ENCODE measurements at regions of chr18 and their contacts with region 1.

Region 1: DNA sequence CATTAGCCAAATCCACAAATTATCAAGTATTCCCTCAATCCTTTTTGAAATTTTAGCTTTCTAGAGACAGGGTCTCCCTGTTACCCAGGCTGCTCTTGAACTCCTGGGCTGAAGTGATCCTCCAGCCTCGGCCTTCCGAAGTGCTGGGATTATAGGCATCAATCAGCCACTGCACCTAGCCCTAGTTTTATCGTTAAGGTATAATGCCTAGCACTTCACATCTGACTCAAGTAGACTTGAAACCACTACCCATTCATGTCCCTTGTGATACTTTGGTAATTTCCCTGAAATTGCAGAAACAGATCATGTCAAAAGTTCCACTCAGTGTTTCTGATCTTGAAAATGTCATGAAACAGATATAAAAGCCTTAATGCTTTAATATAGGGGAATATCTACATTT is 26.3 kb downstream of the MEX3C start:
- DNase-seq: no peak
- H3K4me3 ChIP-seq: no peak overlapping the region
- H3K27ac ChIP-seq: no peak overlapping the region
- H3K4me1 ChIP-seq: peaks cover 5% of the 10 kb centered on the region
- H3K27me3 ChIP-seq: no peaks in the 10 kb centered on the region
- CTCF ChIP-seq: no peak

Region 2: GRCh38 chr18:51039138-51040112 is 131.8 kb before region 1 on chr18:
- intact Hi-C with region 1: no loop called
- DNase-seq: no peak
- H3K4me3 ChIP-seq: no peak overlapping the region
- H3K27ac ChIP-seq: no peak overlapping the region
- H3K4me1 ChIP-seq: peaks cover 100% of the 10 kb centered on the region
- H3K27me3 ChIP-seq: no peaks in the 10 kb centered on the region
- CTCF ChIP-seq: no peak

Region 3: DNA sequence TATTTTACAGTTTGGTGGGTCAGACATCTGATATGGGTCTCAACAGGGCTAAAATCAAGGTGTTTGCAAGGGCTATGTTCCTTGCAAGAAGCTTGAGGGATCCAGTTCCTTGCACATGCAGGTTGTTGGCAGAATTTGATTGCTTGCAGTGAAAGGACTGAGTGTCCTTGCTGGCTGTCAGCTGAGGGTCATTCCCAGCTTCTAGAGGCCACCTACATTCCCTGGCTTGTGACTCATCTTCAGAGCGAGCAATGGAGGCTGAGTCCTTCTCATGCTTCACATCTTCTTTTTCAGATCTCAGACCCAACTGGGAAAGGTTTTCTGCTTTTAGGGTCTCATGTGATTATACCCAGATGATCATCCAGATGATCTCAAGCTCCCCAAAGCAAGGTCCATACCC is 13.9 kb after region 1 on chr18:
- intact Hi-C with region 1: loop called (anchors 2 kb)
- DNase-seq: no peak
- H3K4me3 ChIP-seq: no peak overlapping the region
- H3K27ac ChIP-seq: no peak overlapping the region
- H3K4me1 ChIP-seq: peaks cover 61% of the 10 kb centered on the region
- H3K27me3 ChIP-seq: no peaks in the 10 kb centered on the region
- CTCF ChIP-seq: no peak

Measured in left ventricle myocardium inferior (tissue), 1 donor.